Naive thymus-derived CD4-positive, alpha-beta T cell (primary cell): ENCODE measurements at regions of chr3 and their contacts with region 1.

Region 1: DNA sequence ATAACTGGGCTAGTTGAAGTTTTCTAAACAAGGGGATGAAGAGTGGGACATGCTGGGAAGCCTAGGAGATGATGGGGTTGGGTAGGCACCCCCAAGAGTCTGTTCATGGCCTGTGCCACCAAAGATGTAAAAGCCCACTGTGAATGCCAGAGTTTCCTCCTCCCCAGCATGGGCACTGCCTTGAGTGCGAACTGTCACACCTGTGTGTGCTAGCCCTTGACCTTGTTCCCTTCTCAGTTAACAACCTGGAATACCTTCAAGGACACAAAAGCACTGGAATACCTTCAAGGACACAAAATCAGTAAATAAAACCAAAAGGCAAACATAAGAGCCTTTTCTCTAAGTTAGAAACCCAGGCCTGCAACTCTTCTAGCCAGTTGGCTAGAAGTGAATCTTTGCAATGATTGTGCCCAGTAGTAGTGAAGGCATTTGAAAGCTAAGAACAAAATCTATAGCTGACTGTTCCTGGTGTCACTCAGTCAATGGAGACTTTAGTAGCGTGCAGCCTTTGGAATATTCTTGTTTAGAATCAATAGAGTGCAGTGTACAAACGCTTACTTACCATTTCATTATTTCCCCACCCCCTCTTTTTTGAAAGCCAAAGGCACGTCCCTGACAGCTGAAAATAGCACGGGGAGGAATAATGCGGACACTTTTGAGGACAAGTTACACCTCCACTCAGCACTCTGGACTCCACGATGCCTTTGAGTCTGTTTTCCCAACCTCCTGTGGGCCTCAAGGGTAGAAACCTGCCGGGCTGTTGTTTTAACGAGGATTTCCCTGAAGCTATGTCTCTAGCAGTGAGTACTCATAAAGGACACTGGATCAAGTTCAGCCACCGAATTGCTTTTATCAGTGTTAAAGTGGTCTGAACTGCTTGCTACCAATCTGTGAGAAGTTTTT is 24.2 kb downstream of the PSMD6 start:
- DNase-seq: no peak
- ATAC-seq: no peak
- H3K4me3 ChIP-seq: no peak overlapping the region
- H3K4me3 Mint-ChIP-seq: no peak overlapping the region
- H3K27ac ChIP-seq: no peak overlapping the region
- H3K27ac Mint-ChIP-seq: peak overlapping the region in 8 of 9 donors; percentile 10 to 88 (median 48)
- H3K4me1 ChIP-seq: peaks cover 0 to 10% of the 10 kb centered on the region in 2 donors
- H3K4me1 Mint-ChIP-seq: peaks cover 23 to 74% (median 58%) of the 10 kb centered on the region in 7 donors
- H3K27me3 ChIP-seq: no peaks in the 10 kb centered on the region
- H3K27me3 Mint-ChIP-seq: no peaks in the 10 kb centered on the region

Region 2: GRCh38 chr3:63975723-63976122 is 23.4 kb before region 1 on chr3:
- CTCF ChIA-PET with region 1: interaction called, 249 read pairs
- POLR2A ChIA-PET with region 1: interaction called, 12 read pairs
- intact Hi-C with region 1: no loop called
- DNase-seq: no peak
- ATAC-seq: no peak
- H3K4me3 ChIP-seq: no peak overlapping the region
- H3K4me3 Mint-ChIP-seq: peak overlapping the region; percentile 14 to 88 (median 68)
- H3K27ac ChIP-seq: peak overlapping the region; percentile 19
- H3K27ac Mint-ChIP-seq: peak overlapping the region in 8 of 9 donors; percentile 77 to 96 (median 88)
- H3K4me1 ChIP-seq: peaks cover 88% of the 10 kb centered on the region in 2 donors
- H3K4me1 Mint-ChIP-seq: peaks cover 68 to 100% (median 97%) of the 10 kb centered on the region in 7 donors
- H3K27me3 ChIP-seq: no peaks in the 10 kb centered on the region
- H3K27me3 Mint-ChIP-seq: no peaks in the 10 kb centered on the region